ENCODE measurements at regions of chr1 and their contacts with region 1.

Region 1: GRCh38 chr1:158931055-158931737 is at the start of gene PYHIN1:
- DNase-seq: peak in 7 of 9 donors; percentile 15 to 42 (median 26)
- ATAC-seq: peak; percentile 86
- H3K4me3 ChIP-seq: peak within 1 kb of the TSS; percentile 66
- H3K4me3 Mint-ChIP-seq: peak within 1 kb of the TSS; percentile 64 to 96 (median 89)
- H3K27ac ChIP-seq: peak within 1 kb of the TSS; percentile 61
- H3K27ac Mint-ChIP-seq: peak within 1 kb of the TSS; percentile 69 to 94 (median 82)
- H3K4me1 ChIP-seq: peaks cover 9 to 34% of the 10 kb centered on the region in 2 donors
- H3K4me1 Mint-ChIP-seq: peaks cover 6 to 47% (median 29%) of the 10 kb centered on the region in 7 donors
- H3K27me3 ChIP-seq: no peaks in the 10 kb centered on the region
- H3K27me3 Mint-ChIP-seq: peaks cover 0 to 6% (median 0%) of the 10 kb centered on the region in 5 donors
- total RNA-seq, gene PYHIN1: 20.3 to 48.2 (median 36.1) TPM

Region 2: GRCh38 chr1:158799689-158800088 is 131.5 kb before region 1 on chr1:
- CTCF ChIA-PET with region 1: no interaction called
- POLR2A ChIA-PET with region 1: no interaction called
- intact Hi-C with region 1: loop called (anchors 5 to 10 kb)
- DNase-seq: no peak
- ATAC-seq: no peak
- H3K4me3 ChIP-seq: no peak overlapping the region
- H3K4me3 Mint-ChIP-seq: no peak overlapping the region
- H3K27ac ChIP-seq: no peak overlapping the region
- H3K27ac Mint-ChIP-seq: no peak overlapping the region
- H3K4me1 ChIP-seq: no peaks in the 10 kb centered on the region
- H3K4me1 Mint-ChIP-seq: peaks cover 0 to 5% (median 0%) of the 10 kb centered on the region in 7 donors
- H3K27me3 ChIP-seq: no peaks in the 10 kb centered on the region
- H3K27me3 Mint-ChIP-seq: peaks cover 11 to 35% (median 22%) of the 10 kb centered on the region in 5 donors

Region 3: DNA sequence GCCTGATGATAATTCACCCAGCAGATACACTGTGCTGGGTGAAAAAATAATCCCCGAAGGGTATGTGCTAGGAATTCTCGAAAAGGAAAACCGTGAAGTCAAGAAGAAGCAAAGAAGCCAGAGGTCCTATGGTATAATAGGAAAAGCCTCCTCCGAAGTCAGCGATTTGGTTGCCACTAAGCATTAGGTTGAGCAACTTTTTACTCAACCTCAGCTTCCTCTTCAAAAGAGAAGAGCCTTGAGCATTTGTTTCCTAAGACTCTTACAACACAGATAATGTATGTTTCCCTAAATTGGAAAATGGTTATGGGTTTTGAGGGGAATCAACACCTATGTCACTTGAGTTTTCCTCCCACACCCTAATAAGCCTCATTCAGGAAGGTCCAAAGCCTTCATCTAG is 121.3 kb before region 1 on chr1:
- CTCF ChIA-PET with region 1: no interaction called
- POLR2A ChIA-PET with region 1: no interaction called
- intact Hi-C with region 1: loop called in 1 of 2 experiments (anchors 10 kb)
- DNase-seq: no peak
- ATAC-seq: peak; percentile 67
- H3K4me3 ChIP-seq: no peak overlapping the region
- H3K4me3 Mint-ChIP-seq: no peak overlapping the region
- H3K27ac ChIP-seq: no peak overlapping the region
- H3K27ac Mint-ChIP-seq: no peak overlapping the region
- H3K4me1 ChIP-seq: no peaks in the 10 kb centered on the region
- H3K4me1 Mint-ChIP-seq: peaks cover 0 to 7% (median 0%) of the 10 kb centered on the region in 7 donors
- H3K27me3 ChIP-seq: no peaks in the 10 kb centered on the region
- H3K27me3 Mint-ChIP-seq: peaks cover 0 to 28% (median 4%) of the 10 kb centered on the region in 5 donors

Region 4: GRCh38 chr1:158819461-158820443 is 111.4 kb before region 1 on chr1:
- CTCF ChIA-PET with region 1: no interaction called
- POLR2A ChIA-PET with region 1: no interaction called
- intact Hi-C with region 1: loop called in 1 of 2 experiments (anchors 2 kb)
- DNase-seq: no peak
- ATAC-seq: peak; percentile 84
- H3K4me3 ChIP-seq: no peak overlapping the region
- H3K4me3 Mint-ChIP-seq: peak overlapping the region in 2 of 10 donors; percentile 52 to 86
- H3K27ac ChIP-seq: no peak overlapping the region
- H3K27ac Mint-ChIP-seq: peak overlapping the region in 3 of 9 donors; percentile 16 to 88 (median 18)
- H3K4me1 ChIP-seq: peaks cover 0 to 23% of the 10 kb centered on the region in 2 donors
- H3K4me1 Mint-ChIP-seq: peaks cover 0 to 34% (median 9%) of the 10 kb centered on the region in 7 donors
- H3K27me3 ChIP-seq: no peaks in the 10 kb centered on the region
- H3K27me3 Mint-ChIP-seq: peaks cover 0 to 14% (median 11%) of the 10 kb centered on the region in 5 donors

Region 5: GRCh38 chr1:158873141-158873540 is 58.1 kb before region 1 on chr1:
- CTCF ChIA-PET with region 1: no interaction called
- POLR2A ChIA-PET with region 1: no interaction called
- intact Hi-C with region 1: no loop called
- DNase-seq: no peak
- ATAC-seq: no peak
- H3K4me3 ChIP-seq: no peak overlapping the region
- H3K4me3 Mint-ChIP-seq: no peak overlapping the region
- H3K27ac ChIP-seq: no peak overlapping the region
- H3K27ac Mint-ChIP-seq: no peak overlapping the region
- H3K4me1 ChIP-seq: no peaks in the 10 kb centered on the region
- H3K4me1 Mint-ChIP-seq: no peaks in the 10 kb centered on the region
- H3K27me3 ChIP-seq: no peaks in the 10 kb centered on the region
- H3K27me3 Mint-ChIP-seq: peaks cover 4 to 12% (median 6%) of the 10 kb centered on the region in 5 donors

Region 6: GRCh38 chr1:158916085-158916484 is 15.1 kb before region 1 on chr1:
- CTCF ChIA-PET with region 1: no interaction called
- POLR2A ChIA-PET with region 1: no interaction called
- intact Hi-C with region 1: no loop called
- DNase-seq: no peak
- ATAC-seq: no peak
- H3K4me3 ChIP-seq: no peak overlapping the region
- H3K4me3 Mint-ChIP-seq: no peak overlapping the region
- H3K27ac ChIP-seq: no peak overlapping the region
- H3K27ac Mint-ChIP-seq: no peak overlapping the region
- H3K4me1 ChIP-seq: no peaks in the 10 kb centered on the region
- H3K4me1 Mint-ChIP-seq: no peaks in the 10 kb centered on the region
- H3K27me3 ChIP-seq: no peaks in the 10 kb centered on the region
- H3K27me3 Mint-ChIP-seq: peaks cover 0 to 16% (median 6%) of the 10 kb centered on the region in 5 donors

Region 7: GRCh38 chr1:158951956-158952355 is 20.8 kb after region 1 on chr1:
- CTCF ChIA-PET with region 1: no interaction called
- POLR2A ChIA-PET with region 1: no interaction called
- intact Hi-C with region 1: no loop called
- DNase-seq: no peak
- ATAC-seq: no peak
- H3K4me3 ChIP-seq: no peak overlapping the region
- H3K4me3 Mint-ChIP-seq: no peak overlapping the region
- H3K27ac ChIP-seq: no peak overlapping the region
- H3K27ac Mint-ChIP-seq: no peak overlapping the region
- H3K4me1 ChIP-seq: no peaks in the 10 kb centered on the region
- H3K4me1 Mint-ChIP-seq: peaks cover 0 to 21% (median 2%) of the 10 kb centered on the region in 7 donors
- H3K27me3 ChIP-seq: no peaks in the 10 kb centered on the region
- H3K27me3 Mint-ChIP-seq: peaks cover 0 to 9% (median 0%) of the 10 kb centered on the region in 5 donors

Region 8: GRCh38 chr1:159077120-159077961 is 146.1 kb after region 1 on chr1:
- CTCF ChIA-PET with region 1: no interaction called
- POLR2A ChIA-PET with region 1: no interaction called
- intact Hi-C with region 1: loop called in 1 of 2 experiments (anchors 2 kb)
- DNase-seq: peak in 2 of 9 donors; percentile 37 to 96
- ATAC-seq: peak; percentile 79
- H3K4me3 ChIP-seq: peak overlapping the region; percentile 38
- H3K4me3 Mint-ChIP-seq: peak overlapping the region in 3 of 10 donors; percentile 3 to 90 (median 38)
- H3K27ac ChIP-seq: peak overlapping the region; percentile 18
- H3K27ac Mint-ChIP-seq: peak overlapping the region in 3 of 9 donors; percentile 65 to 99 (median 65)
- H3K4me1 ChIP-seq: peaks cover 0 to 28% of the 10 kb centered on the region in 2 donors
- H3K4me1 Mint-ChIP-seq: peaks cover 0 to 40% (median 4%) of the 10 kb centered on the region in 7 donors
- H3K27me3 ChIP-seq: no peaks in the 10 kb centered on the region
- H3K27me3 Mint-ChIP-seq: peaks cover 0 to 3% (median 1%) of the 10 kb centered on the region in 5 donors

Measured in naive thymus-derived CD4-positive, alpha-beta T cell (primary cell).